Natural killer cell (primary cell): ENCODE measurements at regions of chr19 and their contacts with region 1.

Region 1: GRCh38 chr19:7376151-7376852 is 27.6 kb downstream of the ARHGEF18 start:
- DNase-seq: no peak
- ATAC-seq: no peak
- H3K4me3 ChIP-seq: no peak overlapping the region
- H3K4me3 Mint-ChIP-seq: no peak overlapping the region
- H3K27ac ChIP-seq: no peak overlapping the region
- H3K27ac Mint-ChIP-seq: no peak overlapping the region
- H3K4me1 ChIP-seq: no peaks in the 10 kb centered on the region
- H3K4me1 Mint-ChIP-seq: peaks cover 0 to 5% of the 10 kb centered on the region in 2 donors
- H3K27me3 ChIP-seq: no peaks in the 10 kb centered on the region
- H3K27me3 Mint-ChIP-seq: no peaks in the 10 kb centered on the region
- CTCF ChIP-seq: no peak

Region 2: GRCh38 chr19:7101498-7102253 is 274.6 kb before region 1 on chr19:
- intact Hi-C with region 1: loop called (anchors 1 kb)
- DNase-seq: peak in 1 of 2 donors; percentile 48
- ATAC-seq: no peak
- H3K4me3 ChIP-seq: no peak overlapping the region
- H3K4me3 Mint-ChIP-seq: peak overlapping the region; percentile 49
- H3K27ac ChIP-seq: no peak overlapping the region
- H3K27ac Mint-ChIP-seq: no peak overlapping the region
- H3K4me1 ChIP-seq: peaks cover 10% of the 10 kb centered on the region
- H3K4me1 Mint-ChIP-seq: peaks cover 10 to 20% of the 10 kb centered on the region in 2 donors
- H3K27me3 ChIP-seq: no peaks in the 10 kb centered on the region
- H3K27me3 Mint-ChIP-seq: no peaks in the 10 kb centered on the region
- CTCF ChIP-seq: no peak

Region 3: DNA sequence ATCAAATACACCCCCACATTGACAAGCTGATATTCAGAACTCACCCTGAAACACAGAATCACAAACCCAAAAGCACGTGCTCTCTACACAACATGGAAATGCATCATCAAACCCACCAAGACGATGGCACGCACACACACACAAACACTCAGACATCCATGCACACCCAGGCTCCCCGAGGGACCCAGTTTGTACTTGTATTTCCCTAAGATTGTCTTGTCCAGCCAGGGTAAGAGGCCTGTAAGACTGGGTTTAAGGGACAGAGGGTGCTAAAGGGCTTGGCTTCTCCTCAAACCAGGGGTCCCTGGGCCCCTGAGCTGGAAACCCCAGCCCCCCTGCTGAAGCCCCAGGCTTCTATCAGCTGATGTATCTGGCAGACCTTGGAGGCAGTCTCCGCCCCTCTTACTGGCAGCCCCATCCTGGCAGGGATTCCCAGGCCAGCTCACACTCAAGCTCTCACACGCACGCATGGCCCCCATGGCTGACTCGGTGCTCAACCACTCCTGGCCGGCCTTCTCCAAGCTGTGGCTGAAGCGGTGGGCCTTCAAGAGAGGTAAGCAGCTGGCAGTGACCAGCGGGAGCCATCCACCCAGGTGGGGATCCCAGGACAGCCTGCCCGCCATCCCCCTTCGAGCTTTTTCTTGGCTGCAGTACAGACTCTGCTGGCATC is 21.0 kb before region 1 on chr19:
- intact Hi-C with region 1: loop called (anchors 2 kb)
- DNase-seq: no peak
- ATAC-seq: no peak
- H3K4me3 ChIP-seq: no peak overlapping the region
- H3K4me3 Mint-ChIP-seq: no peak overlapping the region
- H3K27ac ChIP-seq: no peak overlapping the region
- H3K27ac Mint-ChIP-seq: peak overlapping the region in 1 of 2 donors; percentile 76
- H3K4me1 ChIP-seq: peaks cover 32% of the 10 kb centered on the region
- H3K4me1 Mint-ChIP-seq: peaks cover 51 to 69% of the 10 kb centered on the region in 2 donors
- H3K27me3 ChIP-seq: no peaks in the 10 kb centered on the region
- H3K27me3 Mint-ChIP-seq: no peaks in the 10 kb centered on the region
- CTCF ChIP-seq: no peak

Region 4: GRCh38 chr19:7506385-7507328 is 130.4 kb after region 1 on chr19:
- intact Hi-C with region 1: no loop called
- DNase-seq: peak in 1 of 2 donors; percentile 52
- ATAC-seq: peak; percentile 74 to 83 (median 76)
- H3K4me3 ChIP-seq: no peak overlapping the region
- H3K4me3 Mint-ChIP-seq: no peak overlapping the region
- H3K27ac ChIP-seq: no peak overlapping the region
- H3K27ac Mint-ChIP-seq: no peak overlapping the region
- H3K4me1 ChIP-seq: peaks cover 15% of the 10 kb centered on the region
- H3K4me1 Mint-ChIP-seq: peaks cover 0 to 22% of the 10 kb centered on the region in 2 donors
- H3K27me3 ChIP-seq: peaks cover 15% of the 10 kb centered on the region
- H3K27me3 Mint-ChIP-seq: peaks cover 3 to 12% of the 10 kb centered on the region in 2 donors
- CTCF ChIP-seq: no peak